ENCODE measurements at regions of chr5 and their contacts with region 1.

Region 1: DNA sequence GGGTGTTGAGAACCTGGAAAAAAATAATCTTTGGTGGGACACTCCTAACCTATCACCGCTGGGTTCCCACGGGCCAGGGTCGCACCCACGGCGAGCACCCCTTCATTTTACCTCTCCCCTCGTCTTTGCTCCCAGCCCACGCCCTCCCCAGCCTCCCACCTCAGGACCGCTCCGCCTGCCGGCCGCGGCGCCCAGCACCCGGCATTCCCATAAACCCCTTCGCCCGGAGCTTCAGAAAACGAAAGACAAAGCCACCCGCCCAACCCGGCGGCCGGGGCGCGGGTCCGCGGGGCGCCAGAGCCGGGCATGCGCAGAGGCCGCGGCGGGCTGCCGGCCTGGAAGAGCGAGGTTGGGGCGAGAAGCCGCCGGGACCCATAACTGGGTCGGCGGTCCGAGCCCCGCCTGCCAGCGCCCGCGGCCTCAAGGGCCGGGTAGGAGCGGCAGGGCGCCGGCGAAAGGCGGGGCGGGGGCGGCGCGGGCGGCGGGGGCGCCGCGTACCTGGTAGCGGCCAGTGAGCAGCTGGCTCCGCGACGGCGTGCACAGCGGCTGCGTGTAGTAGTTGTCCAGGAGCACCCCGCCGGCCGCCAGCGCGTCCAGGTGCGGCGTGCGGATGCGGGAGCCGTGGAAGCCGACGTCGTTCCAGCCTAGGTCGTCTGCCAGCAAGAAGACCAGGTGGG is 533 bp downstream of the ARSB start:
- DNase-seq: peak; percentile 95
- H3K4me3 Mint-ChIP-seq: peak overlapping the region; percentile 88
- H3K27ac Mint-ChIP-seq: peak overlapping the region; percentile 92
- H3K4me1 Mint-ChIP-seq: peaks cover 34% of the 10 kb centered on the region
- H3K27me3 Mint-ChIP-seq: no peaks in the 10 kb centered on the region

Region 2: GRCh38 chr5:77775790-77776553 is 1208.6 kb before region 1 on chr5 and contains the start of gene TBCA:
- intact Hi-C with region 1: loop called (anchors 10 kb)
- DNase-seq: peak; percentile 98
- H3K4me3 Mint-ChIP-seq: peak within 1 kb of the TSS; percentile 96
- H3K27ac Mint-ChIP-seq: peak within 1 kb of the TSS; percentile 98
- H3K4me1 Mint-ChIP-seq: peaks cover 41% of the 10 kb centered on the region
- H3K27me3 Mint-ChIP-seq: no peaks in the 10 kb centered on the region
- total RNA-seq, gene TBCA: 199 and 207 TPM in 2 replicates

Region 3: DNA sequence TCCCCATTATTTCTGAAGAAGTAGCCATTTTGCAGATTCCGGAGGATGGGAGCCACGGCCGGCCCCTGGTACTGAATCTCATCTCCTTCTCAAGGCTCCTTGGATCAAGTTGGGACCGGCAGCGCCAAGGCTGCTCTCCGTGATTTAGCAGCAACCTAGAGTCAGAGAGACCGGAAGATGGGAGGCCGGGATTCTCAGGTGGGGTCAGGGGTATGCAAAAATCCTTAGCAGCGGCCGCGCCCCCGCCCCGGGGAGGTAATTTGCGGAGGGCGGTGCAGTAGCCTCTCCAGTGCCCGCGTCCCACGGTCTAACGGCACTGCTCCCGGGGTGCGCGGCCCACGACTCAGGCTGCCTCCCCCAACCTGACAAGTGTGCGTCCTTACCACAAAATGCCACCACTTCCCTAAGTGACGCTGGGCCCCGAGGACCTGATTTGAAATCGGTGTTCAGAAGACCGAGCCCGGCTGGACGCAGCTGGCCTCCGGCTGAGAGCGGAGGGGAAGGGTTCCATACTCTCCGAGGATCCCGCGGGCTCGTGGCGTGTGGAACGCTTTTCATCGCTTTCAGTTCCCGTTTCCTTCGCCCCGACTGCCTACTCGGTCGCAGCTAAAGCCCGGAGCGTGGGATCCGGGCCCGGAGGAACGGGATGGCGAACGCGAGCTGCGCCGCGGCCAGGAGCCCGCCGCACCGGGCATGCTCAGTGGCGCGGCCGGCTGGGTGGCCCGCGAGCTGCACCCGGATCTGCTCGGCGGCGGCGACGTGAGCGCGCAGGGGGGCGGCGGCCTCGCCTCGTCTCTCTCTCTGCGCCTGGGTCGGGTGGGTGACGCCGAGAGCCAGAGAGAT is 624.5 kb before region 1 on chr5 and contains the start of gene SCAMP1:
- intact Hi-C with region 1: loop called (anchors 2 kb)
- DNase-seq: peak; percentile 98
- H3K4me3 Mint-ChIP-seq: peak within 1 kb of the TSS; percentile 97
- H3K27ac Mint-ChIP-seq: peak within 1 kb of the TSS; percentile 98
- H3K4me1 Mint-ChIP-seq: peaks cover 28% of the 10 kb centered on the region
- H3K27me3 Mint-ChIP-seq: no peaks in the 10 kb centered on the region
- total RNA-seq, gene SCAMP1: 20.8 and 23.1 TPM in 2 replicates

Region 4: DNA sequence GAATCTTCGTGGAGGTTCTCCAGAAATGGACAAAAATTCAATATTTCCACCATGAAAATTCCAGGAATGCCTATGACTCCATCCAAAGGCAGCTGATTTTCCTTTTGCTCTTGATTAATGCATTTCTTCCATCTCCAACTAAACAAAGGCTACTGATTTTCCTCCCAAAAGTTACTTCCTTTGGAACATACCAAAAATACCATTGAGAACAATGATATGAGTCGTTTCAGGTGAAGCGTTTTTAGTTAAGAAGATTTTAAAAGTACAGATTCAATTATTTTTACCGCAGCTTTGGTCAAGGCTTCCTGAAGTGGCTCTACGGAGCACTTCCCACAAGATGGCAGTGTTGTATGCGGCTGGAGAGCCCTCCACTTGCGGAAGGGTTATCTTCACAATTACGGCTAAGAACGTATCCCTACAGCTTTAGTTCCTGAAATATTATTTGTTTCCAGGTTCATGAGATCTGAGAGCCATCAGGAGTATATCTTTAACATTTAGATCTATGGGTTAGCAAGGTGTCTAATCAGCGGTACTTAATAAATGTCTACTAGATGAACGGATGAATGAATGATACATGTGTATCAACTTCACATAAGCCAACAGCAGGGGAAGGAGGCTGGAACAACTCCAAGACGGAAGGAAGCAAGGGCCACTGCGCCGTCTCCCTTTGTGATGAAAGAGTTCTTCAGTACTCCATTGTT is 36.4 kb after region 1 on chr5:
- intact Hi-C with region 1: loop called (anchors 5 kb)
- DNase-seq: peak; percentile 76
- H3K4me3 Mint-ChIP-seq: no peak overlapping the region
- H3K27ac Mint-ChIP-seq: no peak overlapping the region
- H3K4me1 Mint-ChIP-seq: peaks cover 11% of the 10 kb centered on the region
- H3K27me3 Mint-ChIP-seq: peaks cover 72% of the 10 kb centered on the region

Region 5: DNA sequence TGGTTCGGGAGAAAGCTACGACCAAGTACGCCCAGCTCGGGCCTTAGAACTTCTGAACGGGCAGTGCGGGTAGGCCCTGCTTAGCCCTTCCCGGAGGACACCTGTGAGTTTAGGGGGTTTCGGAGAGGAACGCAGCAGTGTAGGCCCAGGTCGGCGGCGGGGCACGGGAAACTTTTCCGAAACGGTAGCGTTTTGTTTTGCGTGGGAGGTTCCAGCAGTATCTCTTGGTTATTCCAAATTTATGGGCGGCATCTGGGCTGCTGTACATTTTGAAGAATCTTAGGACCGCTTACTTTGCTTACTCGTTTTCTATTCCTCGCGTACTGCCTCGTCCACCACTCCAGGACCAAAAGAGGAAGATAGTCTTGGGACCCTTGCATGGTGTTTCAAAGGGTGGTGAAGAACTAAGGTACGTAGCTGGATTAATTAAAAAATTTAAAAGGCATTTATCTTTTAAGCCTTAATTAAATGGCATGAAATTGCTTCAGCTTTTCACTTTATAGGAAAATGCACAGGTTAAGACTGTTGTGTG is 628.2 kb after region 1 on chr5:
- intact Hi-C with region 1: loop called (anchors 2 kb)
- DNase-seq: no peak
- H3K4me3 Mint-ChIP-seq: peak overlapping the region; percentile 94
- H3K27ac Mint-ChIP-seq: peak overlapping the region; percentile 97
- H3K4me1 Mint-ChIP-seq: peaks cover 28% of the 10 kb centered on the region
- H3K27me3 Mint-ChIP-seq: no peaks in the 10 kb centered on the region

Measured in activated CD4-positive, alpha-beta T cell treated with anti-CD3 and anti-CD28 coated beads, Interleukin-2, amount 10 ng/mL, durations not matched to agents 24 days and 14 days (primary cell).